ENCODE measurements at regions of chr11 and their contacts with region 1.

Region 1: DNA sequence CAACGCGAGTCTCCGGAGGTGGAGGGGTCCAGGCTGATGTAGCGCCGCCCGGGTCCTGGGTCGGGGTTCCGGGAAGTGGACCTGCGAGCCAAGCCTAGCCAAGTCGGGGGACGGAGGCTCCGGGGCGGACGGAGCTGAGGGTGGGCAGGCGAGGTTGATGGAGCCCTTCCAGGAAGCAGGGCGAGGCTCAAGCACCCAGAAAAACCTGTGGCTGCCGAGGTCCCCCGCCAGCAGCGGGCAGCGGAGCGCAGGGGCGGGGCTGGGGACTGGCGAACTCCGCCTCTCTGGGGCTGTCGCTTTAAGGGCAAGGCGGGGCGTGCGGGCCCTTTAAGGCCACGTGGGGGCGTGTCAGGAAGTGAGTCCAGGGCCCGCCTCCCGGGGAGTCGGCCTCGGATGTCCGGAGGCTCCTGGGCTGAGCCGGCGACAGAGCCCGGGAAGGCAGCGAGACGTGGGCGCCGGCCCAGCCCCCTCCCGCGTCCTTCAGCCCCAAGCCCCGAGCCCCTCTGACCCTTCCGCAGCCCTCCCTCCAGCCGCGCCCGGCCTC is at the start of gene SLC35C1:
- DNase-seq: peak; percentile 99
- H3K4me3 ChIP-seq: peak within 1 kb of the TSS; percentile 63 to 92 (median 77)
- H3K27ac ChIP-seq: peak within 1 kb of the TSS; percentile 87 to 94 (median 89)
- H3K4me1 ChIP-seq: peaks cover 0 to 47% (median 31%) of the 10 kb centered on the region in 4 donors
- H3K27me3 ChIP-seq: no peaks in the 10 kb centered on the region
- CTCF ChIP-seq: no peak
- EP300 ChIP-seq: no peak
- POLR2A ChIP-seq: peak; percentile 68 to 90
- total RNA-seq, gene SLC35C1: 5.3 to 8.6 (median 7.2) TPM

Region 2: DNA sequence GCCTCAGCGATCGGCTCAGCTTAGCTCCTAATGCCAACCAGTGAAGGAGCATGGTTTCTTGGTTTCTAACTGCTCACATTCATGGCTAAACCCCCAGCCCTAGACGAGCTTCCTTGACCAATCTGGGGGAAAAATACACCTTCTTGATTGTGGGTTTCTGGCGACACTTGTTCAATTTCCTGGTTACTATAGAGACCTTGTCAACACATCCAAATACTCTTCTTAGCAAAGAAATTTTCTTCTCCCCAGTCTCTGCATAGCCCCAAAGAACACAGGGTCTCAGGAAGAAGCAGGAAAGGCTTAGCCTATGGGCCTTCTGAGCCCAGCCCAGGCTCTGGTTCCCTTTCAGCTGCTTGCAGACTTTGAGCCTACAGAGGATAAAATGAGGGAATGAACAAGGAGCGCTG is 430.2 kb before region 1 on chr11:
- intact Hi-C with region 1: no loop called
- DNase-seq: no peak
- H3K4me3 ChIP-seq: no peak overlapping the region
- H3K27ac ChIP-seq: no peak overlapping the region
- H3K4me1 ChIP-seq: peaks cover 0 to 5% (median 2%) of the 10 kb centered on the region in 4 donors
- H3K27me3 ChIP-seq: peaks cover 0 to 20% (median 8%) of the 10 kb centered on the region in 3 donors
- CTCF ChIP-seq: no peak
- EP300 ChIP-seq: no peak
- POLR2A ChIP-seq: no peak

Region 3: GRCh38 chr11:45724145-45724544 is 80.7 kb before region 1 on chr11:
- intact Hi-C with region 1: no loop called
- DNase-seq: no peak
- H3K4me3 ChIP-seq: no peak overlapping the region
- H3K27ac ChIP-seq: no peak overlapping the region
- H3K4me1 ChIP-seq: no peaks in the 10 kb centered on the region
- H3K27me3 ChIP-seq: no peaks in the 10 kb centered on the region
- CTCF ChIP-seq: no peak
- EP300 ChIP-seq: no peak
- POLR2A ChIP-seq: no peak

Region 4: DNA sequence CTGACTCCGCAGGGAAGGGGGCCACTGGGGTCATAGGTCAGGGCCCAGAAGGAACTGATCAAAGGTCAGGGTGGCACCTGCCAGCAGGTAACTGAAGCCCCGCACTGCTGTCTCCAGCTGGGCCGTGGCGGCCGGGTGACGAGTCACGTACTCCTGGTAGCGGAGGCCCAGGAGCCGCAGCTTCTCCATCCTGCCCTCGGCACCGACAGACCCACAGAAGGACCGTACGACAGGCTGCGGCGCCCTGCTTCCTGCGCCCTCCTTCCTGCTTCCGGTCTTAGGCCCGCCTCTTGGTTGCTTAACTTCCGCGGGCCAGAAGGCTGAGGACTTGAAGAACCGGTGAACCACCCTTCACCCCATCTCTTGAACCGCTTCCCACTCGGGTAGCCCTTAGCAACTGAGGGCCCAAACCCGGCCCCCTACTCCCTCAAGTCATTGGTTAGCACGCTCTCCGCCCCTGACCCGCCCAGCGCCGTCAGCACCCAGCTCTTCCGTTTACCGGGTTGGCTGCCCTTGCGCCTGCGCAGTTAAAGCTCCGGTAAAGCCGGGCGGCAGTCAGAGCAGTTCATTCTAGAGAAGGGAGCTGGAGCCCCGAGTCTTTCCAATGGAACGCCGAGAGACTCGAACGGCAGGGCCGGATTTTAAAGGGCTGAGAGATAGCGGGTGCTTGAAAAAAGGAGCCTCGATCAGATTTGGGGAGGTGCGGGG is 112.9 kb after region 1 on chr11 and contains the start of gene PEX16:
- intact Hi-C with region 1: loop called (anchors 1 kb)
- DNase-seq: peak; percentile 99
- H3K4me3 ChIP-seq: peak within 1 kb of the TSS; percentile 81 to 96 (median 86)
- H3K27ac ChIP-seq: peak within 1 kb of the TSS; percentile 90 to 92 (median 91)
- H3K4me1 ChIP-seq: peaks cover 0 to 31% (median 26%) of the 10 kb centered on the region in 4 donors
- H3K27me3 ChIP-seq: peaks cover 8 to 16% (median 13%) of the 10 kb centered on the region in 3 donors
- CTCF ChIP-seq: no peak
- EP300 ChIP-seq: peak in 1 of 4 donors; percentile 24
- POLR2A ChIP-seq: peak; percentile 63 to 75
- total RNA-seq, gene PEX16: 13.8 to 28.2 (median 21.6) TPM

Measured in sigmoid colon (tissue), 7 donors.